Caco-2 (cell line): ENCODE measurements at regions of chr1 and their contacts with region 1.

Region 1: GRCh38 chr1:221045842-221046831 is 166.9 kb downstream of the HLX start:
- DNase-seq: no peak
- H3K4me3 ChIP-seq: no peak overlapping the region
- H3K4me3 Mint-ChIP-seq: no peak overlapping the region
- H3K27ac Mint-ChIP-seq: no peak overlapping the region
- H3K4me1 ChIP-seq: no peaks in the 10 kb centered on the region
- H3K4me1 Mint-ChIP-seq: no peaks in the 10 kb centered on the region
- H3K27me3 ChIP-seq: no peaks in the 10 kb centered on the region
- H3K27me3 Mint-ChIP-seq: peaks cover 11% of the 10 kb centered on the region
- CTCF ChIP-seq: no peak

Region 2: DNA sequence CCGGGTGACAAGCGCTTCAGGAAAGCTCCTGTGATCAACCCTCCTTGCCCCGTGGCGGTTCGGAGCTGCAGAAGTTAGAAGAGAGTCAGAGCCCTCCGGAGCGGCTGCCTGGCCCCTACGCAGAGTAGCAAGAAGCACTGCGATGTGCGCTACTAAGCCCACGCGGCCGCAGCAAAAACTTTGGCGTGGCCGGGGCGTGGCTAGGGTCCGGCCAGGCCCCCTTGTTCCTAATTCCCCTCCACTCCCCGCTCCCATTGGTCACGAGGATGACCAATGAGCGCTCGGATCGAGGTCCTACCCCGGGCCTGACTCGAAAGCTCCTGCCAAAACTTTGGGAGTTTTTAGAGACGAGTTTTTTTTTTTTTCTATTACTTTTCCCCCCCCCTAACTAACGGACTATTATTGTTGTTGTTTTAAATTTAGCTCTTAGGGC is 167.0 kb before region 1 on chr1 and contains the start of gene HLX:
- CTCF ChIA-PET with region 1: no interaction called
- POLR2A ChIA-PET with region 1: no interaction called
- intact Hi-C with region 1: loop called (anchors 10 kb)
- DNase-seq: peak in 1 of 2 experiments; percentile 50
- H3K4me3 ChIP-seq: peak within 1 kb of the TSS; percentile 56
- H3K4me3 Mint-ChIP-seq: peak within 1 kb of the TSS; percentile 69
- H3K27ac Mint-ChIP-seq: no peak within 1 kb of the TSS
- H3K4me1 ChIP-seq: peaks cover 5% of the 10 kb centered on the region
- H3K4me1 Mint-ChIP-seq: no peaks in the 10 kb centered on the region
- H3K27me3 ChIP-seq: peaks cover 1% of the 10 kb centered on the region; the same call in 1 of the 2 replicates
- H3K27me3 Mint-ChIP-seq: peaks cover 26% of the 10 kb centered on the region
- CTCF ChIP-seq: no peak
- total RNA-seq, gene HLX: 0.28 TPM in 1 of 2 replicates, not detected in the other